Naive thymus-derived CD4-positive, alpha-beta T cell (primary cell): ENCODE measurements at regions of chr1 and their contacts with region 1.

Region 1: GRCh38 chr1:100351095-100351891 is 1.0 kb upstream of the CDC14A start:
- DNase-seq: peak; percentile 73 to 91 (median 85)
- ATAC-seq: peak; percentile 82
- H3K4me3 ChIP-seq: peak overlapping the region; percentile 94
- H3K4me3 Mint-ChIP-seq: peak overlapping the region; percentile 89 to 100 (median 98)
- H3K27ac ChIP-seq: peak overlapping the region; percentile 89
- H3K27ac Mint-ChIP-seq: peak overlapping the region; percentile 95 to 100 (median 98)
- H3K4me1 ChIP-seq: peaks cover 10 to 19% of the 10 kb centered on the region in 2 donors
- H3K4me1 Mint-ChIP-seq: peaks cover 23 to 35% (median 26%) of the 10 kb centered on the region in 7 donors
- H3K27me3 ChIP-seq: no peaks in the 10 kb centered on the region
- H3K27me3 Mint-ChIP-seq: peaks cover 0 to under 1% (median 0%) of the 10 kb centered on the region in 5 donors

Region 2: DNA sequence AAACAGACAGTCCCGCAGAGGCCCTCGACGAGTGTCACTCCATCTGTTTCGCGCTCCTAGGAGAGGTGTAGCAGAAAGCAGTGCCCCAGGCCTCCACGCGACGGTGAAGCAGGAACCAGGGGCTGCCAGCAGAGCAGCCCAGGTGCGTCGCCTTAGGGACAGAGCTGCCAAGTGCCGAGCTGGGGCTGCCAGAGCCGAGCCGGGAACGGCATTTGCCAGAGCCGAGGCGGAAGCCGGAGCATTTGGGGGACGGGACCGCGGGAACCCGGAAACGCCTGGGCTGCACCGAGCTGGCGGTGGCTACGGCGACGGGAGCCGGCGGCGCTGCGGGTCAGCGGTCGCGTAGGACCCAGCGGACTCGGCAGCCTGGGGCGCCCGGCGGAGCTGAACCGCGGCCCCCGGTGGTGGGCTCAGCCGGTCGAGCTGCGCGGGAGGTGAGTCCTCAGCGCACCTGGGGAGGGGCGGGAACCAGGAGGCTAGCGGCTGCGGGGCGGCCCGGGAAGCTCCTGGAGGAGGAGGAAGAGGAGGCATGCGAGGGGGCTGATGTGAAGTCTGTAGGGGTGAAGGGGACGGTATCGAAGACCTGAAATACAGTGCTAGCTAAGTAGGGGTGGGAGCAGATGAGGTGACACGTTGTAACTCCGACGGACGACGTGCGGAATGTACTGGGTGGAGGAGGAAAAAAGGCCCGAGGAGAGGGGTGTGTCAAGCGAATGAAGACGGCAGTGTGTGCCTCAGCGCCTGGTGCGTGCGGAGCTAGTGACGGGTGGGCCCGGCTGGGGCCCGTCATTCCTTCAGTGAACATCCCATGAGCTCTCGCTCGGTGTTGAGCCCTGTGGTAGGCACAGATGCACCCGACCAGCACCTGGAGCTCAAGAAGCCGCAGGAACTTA is 381.3 kb before region 1 on chr1 and contains the start of gene SLC35A3:
- CTCF ChIA-PET with region 1: no interaction called
- POLR2A ChIA-PET with region 1: no interaction called
- intact Hi-C with region 1: loop called (anchors 1 to 5 kb)
- DNase-seq: peak; percentile 69 to 85 (median 78)
- ATAC-seq: peak; percentile 89
- H3K4me3 ChIP-seq: peak within 1 kb of the TSS; percentile 75
- H3K4me3 Mint-ChIP-seq: peak within 1 kb of the TSS; percentile 96 to 100 (median 100)
- H3K27ac ChIP-seq: peak within 1 kb of the TSS; percentile 83
- H3K27ac Mint-ChIP-seq: peak within 1 kb of the TSS; percentile 91 to 99 (median 97)
- H3K4me1 ChIP-seq: peaks cover 6 to 20% of the 10 kb centered on the region in 2 donors
- H3K4me1 Mint-ChIP-seq: peaks cover 22 to 55% (median 40%) of the 10 kb centered on the region in 7 donors
- H3K27me3 ChIP-seq: no peaks in the 10 kb centered on the region
- H3K27me3 Mint-ChIP-seq: no peaks in the 10 kb centered on the region
- total RNA-seq, gene SLC35A3: 21.1 to 31.6 (median 27.3) TPM

Region 3: GRCh38 chr1:100265931-100266740 is 85.2 kb before region 1 on chr1 and contains the start of gene RTCA:
- CTCF ChIA-PET with region 1: no interaction called
- POLR2A ChIA-PET with region 1: interaction called, 16 read pairs
- intact Hi-C with region 1: loop called (anchors 1 kb)
- DNase-seq: peak; percentile 91 to 95 (median 94)
- ATAC-seq: peak; percentile 98
- H3K4me3 ChIP-seq: peak within 1 kb of the TSS; percentile 88
- H3K4me3 Mint-ChIP-seq: peak within 1 kb of the TSS; percentile 97 to 100 (median 100)
- H3K27ac ChIP-seq: peak within 1 kb of the TSS; percentile 88
- H3K27ac Mint-ChIP-seq: peak within 1 kb of the TSS; percentile 94 to 99 (median 97)
- H3K4me1 ChIP-seq: peaks cover 25 to 26% of the 10 kb centered on the region in 2 donors
- H3K4me1 Mint-ChIP-seq: peaks cover 23 to 58% (median 51%) of the 10 kb centered on the region in 7 donors
- H3K27me3 ChIP-seq: no peaks in the 10 kb centered on the region
- H3K27me3 Mint-ChIP-seq: peaks cover 0 to 3% (median 0%) of the 10 kb centered on the region in 5 donors
- total RNA-seq, gene RTCA: 33.3 to 47.7 (median 35.8) TPM

Region 4: DNA sequence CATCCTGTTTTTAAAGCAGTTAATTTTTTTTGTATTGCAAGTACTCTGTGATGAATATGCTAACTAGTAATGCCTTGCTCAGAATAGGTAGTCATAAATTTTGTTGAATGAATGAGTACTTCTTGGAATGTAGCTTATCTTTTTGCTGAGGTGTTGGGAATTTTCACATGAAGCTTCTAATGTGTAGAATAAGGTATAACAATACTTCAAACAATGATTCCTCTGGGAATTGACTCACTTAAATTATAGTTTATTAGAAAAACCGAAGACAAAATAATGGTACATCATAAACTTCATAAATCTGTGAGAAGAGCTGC is 14.9 kb after region 1 on chr1:
- CTCF ChIA-PET with region 1: interaction called, 3 read pairs
- POLR2A ChIA-PET with region 1: interaction called, 44 read pairs
- intact Hi-C with region 1: loop called in 1 of 2 experiments (anchors 1 kb)
- DNase-seq: no peak
- ATAC-seq: no peak
- H3K4me3 ChIP-seq: no peak overlapping the region
- H3K4me3 Mint-ChIP-seq: peak overlapping the region in 3 of 10 donors; percentile 8 to 66 (median 27)
- H3K27ac ChIP-seq: no peak overlapping the region
- H3K27ac Mint-ChIP-seq: peak overlapping the region in 6 of 9 donors; percentile 7 to 89 (median 54)
- H3K4me1 ChIP-seq: peaks cover 46 to 47% of the 10 kb centered on the region in 2 donors
- H3K4me1 Mint-ChIP-seq: peaks cover 55 to 92% (median 79%) of the 10 kb centered on the region in 7 donors
- H3K27me3 ChIP-seq: no peaks in the 10 kb centered on the region
- H3K27me3 Mint-ChIP-seq: no peaks in the 10 kb centered on the region

Region 5: DNA sequence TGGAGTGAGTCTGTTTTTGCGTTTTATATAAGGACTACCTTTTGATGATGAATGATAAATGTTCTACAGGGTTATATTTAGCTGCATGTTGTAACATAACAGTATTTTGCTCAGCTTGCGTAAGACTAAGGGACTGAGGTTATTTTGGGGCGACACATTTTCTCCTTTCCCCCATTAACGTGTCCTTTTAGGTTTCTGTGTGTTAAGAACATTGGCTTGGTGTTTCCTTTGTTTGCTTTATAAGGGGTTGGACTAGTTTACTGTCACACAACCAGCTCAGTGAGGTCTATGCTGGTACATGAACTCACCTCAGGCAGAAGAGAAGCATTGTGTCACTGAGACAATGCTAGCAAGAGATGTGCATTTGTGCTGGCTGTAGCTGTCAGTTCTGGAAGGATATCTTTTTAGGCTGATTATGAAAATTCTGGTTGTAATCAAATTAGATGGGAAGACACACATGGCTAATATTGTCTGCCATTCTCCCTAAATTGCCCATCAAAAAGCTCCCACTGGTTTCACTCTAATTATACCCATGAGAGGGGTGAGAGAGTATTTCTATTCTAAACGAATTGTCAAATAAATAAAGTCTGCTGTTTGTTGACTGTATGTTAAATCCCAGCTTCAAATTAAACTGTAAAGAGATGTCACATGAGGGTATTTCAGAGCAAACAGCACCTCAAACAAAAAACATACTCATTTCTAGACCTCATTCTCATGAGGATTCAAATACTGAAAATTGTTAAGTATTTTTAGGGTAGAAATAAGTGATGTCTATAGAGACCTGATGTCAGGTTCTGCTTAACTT is 63.6 kb after region 1 on chr1:
- CTCF ChIA-PET with region 1: no interaction called
- POLR2A ChIA-PET with region 1: interaction called, 22 read pairs
- intact Hi-C with region 1: no loop called
- DNase-seq: peak in 2 of 9 donors; percentile 45 to 51
- ATAC-seq: peak; percentile 73
- H3K4me3 ChIP-seq: no peak overlapping the region
- H3K4me3 Mint-ChIP-seq: peak overlapping the region in 9 of 10 donors; percentile 0 to 72 (median 54)
- H3K27ac ChIP-seq: peak overlapping the region; percentile 44
- H3K27ac Mint-ChIP-seq: peak overlapping the region; percentile 16 to 92 (median 82)
- H3K4me1 ChIP-seq: peaks cover 46 to 57% of the 10 kb centered on the region in 2 donors
- H3K4me1 Mint-ChIP-seq: peaks cover 55 to 90% (median 81%) of the 10 kb centered on the region in 7 donors
- H3K27me3 ChIP-seq: no peaks in the 10 kb centered on the region
- H3K27me3 Mint-ChIP-seq: no peaks in the 10 kb centered on the region

Region 6: GRCh38 chr1:100452641-100453040 is 101.3 kb after region 1 on chr1:
- CTCF ChIA-PET with region 1: interaction called, 81 read pairs
- POLR2A ChIA-PET with region 1: interaction called, 37 read pairs
- intact Hi-C with region 1: loop called (anchors 1 kb)
- DNase-seq: peak in 7 of 9 donors; percentile 41 to 81 (median 64)
- ATAC-seq: peak; percentile 95
- H3K4me3 ChIP-seq: no peak overlapping the region
- H3K4me3 Mint-ChIP-seq: peak overlapping the region; percentile 20 to 63 (median 50)
- H3K27ac ChIP-seq: peak overlapping the region; percentile 80
- H3K27ac Mint-ChIP-seq: peak overlapping the region; percentile 79 to 99 (median 93)
- H3K4me1 ChIP-seq: peaks cover 55 to 59% of the 10 kb centered on the region in 2 donors
- H3K4me1 Mint-ChIP-seq: peaks cover 29 to 92% (median 84%) of the 10 kb centered on the region in 7 donors
- H3K27me3 ChIP-seq: no peaks in the 10 kb centered on the region
- H3K27me3 Mint-ChIP-seq: no peaks in the 10 kb centered on the region